ENCODE measurements at regions of chr11 and their contacts with region 1.

Region 1: GRCh38 chr11:73335204-73335923 is 27.3 kb downstream of the ARHGEF17 start:
- DNase-seq: no peak
- H3K4me3 ChIP-seq: no peak overlapping the region
- CTCF ChIP-seq: peak; percentile 91

Region 2: GRCh38 chr11:73295231-73295995 is 40.0 kb before region 1 on chr11:
- CTCF ChIA-PET with region 1: interaction called, 605 read pairs
- POLR2A ChIA-PET with region 1: no interaction called
- DNase-seq: no peak
- H3K4me3 ChIP-seq: no peak overlapping the region
- CTCF ChIP-seq: peak; percentile 94

Region 3: DNA sequence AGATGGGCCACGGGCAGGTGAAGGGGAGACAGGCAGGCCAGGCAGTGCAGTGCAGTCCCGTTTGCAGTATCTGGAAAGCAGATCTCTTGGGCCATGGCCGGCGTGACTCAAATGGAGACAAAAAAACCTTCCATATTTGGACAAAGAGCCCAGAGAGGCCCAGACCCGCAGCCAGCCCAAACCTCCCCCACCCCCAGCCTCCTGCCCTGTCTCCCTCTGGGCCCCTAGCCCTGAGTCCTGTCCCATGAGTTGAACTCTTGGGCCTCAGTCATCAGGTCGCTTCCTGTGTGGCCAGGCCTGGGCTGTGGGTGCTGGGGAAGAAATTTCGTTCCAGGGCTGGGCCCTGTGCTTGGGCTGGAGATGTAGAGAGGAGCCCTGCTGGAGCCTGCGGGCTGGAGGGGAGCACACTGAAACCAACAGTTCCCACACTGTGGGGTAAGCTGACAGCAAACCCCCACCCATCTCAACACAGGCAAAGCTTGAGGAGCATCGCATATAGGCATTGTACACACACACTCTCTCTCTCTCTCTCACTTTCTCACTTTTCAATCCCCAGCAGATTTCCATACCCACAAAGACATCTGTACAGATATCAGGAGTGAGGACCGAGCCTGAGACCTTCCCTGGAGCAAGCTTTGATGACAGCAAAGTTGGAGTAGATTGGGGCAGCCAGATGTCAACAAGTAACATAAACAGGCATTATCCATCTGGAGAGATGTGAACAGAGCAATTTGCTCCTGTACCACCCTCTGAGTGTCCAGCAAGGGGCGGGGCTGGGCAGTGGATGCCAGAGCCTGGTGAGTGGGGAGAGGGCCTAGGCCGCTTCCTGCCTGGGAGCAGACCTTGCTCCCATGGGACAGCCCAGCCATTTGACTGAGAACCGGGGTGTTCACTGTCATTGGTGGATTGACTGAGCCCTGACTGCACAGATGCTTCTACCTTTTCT is 10.1 kb before region 1 on chr11:
- CTCF ChIA-PET with region 1: interaction called, 102 read pairs
- POLR2A ChIA-PET with region 1: interaction called, 16 read pairs
- DNase-seq: no peak
- H3K4me3 ChIP-seq: no peak overlapping the region
- CTCF ChIP-seq: no peak

Region 4: GRCh38 chr11:73360336-73361013 is 25.1 kb after region 1 on chr11:
- CTCF ChIA-PET with region 1: interaction called, 119 read pairs
- POLR2A ChIA-PET with region 1: no interaction called
- DNase-seq: no peak
- H3K4me3 ChIP-seq: no peak overlapping the region
- CTCF ChIP-seq: peak; percentile 46